ENCODE measurements at regions of chr19 and their contacts with region 1.

Region 1: DNA sequence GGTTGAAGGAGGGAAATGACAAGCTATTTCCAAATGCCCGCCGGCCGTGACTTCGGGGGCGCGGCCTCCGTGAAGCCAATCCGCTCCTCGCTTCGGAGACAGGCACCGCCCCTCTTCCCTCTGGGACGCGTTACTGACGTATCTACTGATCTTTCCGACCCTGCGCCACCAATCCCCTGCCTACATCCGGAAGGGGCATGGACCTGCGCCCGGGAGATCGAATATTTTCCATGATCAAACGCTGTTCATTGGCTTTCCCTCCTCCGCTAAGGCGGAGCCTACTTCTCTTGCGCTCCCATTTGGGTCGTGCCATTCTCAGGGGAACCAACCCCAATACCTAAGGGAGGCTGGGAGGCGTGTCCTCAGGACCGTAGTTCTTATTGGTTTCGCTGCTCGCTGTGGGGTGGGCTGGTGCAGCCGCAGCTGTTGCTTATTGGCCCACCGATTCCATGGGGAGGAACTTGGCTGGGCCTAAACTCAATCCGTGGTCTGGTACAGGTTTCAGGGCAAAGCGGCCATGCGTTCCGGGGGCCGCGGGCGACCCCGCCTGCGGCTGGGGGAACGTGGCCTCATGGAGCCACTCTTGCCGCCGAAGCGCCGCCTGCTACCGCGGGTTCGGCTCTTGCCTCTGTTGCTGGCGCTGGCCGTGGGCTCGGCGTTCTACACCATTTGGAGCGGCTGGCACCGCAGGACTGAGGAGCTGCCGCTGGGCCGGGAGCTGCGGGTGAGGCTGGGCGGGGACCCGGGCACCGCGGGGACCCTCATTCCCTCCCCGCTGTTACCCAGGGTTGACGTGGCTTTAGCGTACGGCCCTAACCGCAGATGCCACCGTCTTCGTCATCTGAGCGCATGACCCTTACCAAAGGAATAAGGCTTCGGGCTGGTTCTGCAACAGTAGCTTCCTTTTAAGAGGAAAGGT is at the start of gene QPCTL:
- DNase-seq: peak; percentile 90 to 99 (median 98)
- H3K4me3 ChIP-seq: peak within 1 kb of the TSS; percentile 68 to 100 (median 90)
- H3K27ac ChIP-seq: peak within 1 kb of the TSS; percentile 25 to 96 (median 84)
- H3K27me3 ChIP-seq: no peaks in the 10 kb centered on the region
- CTCF ChIP-seq: peak in 13 of 56 donors; percentile 0 to 58 (median 23)
- total RNA-seq, gene QPCTL: 3.0 to 16.5 (median 8.6) TPM

Region 2: GRCh38 chr19:45584332-45585157 is 107.9 kb before region 1 on chr19 and contains the start of gene OPA3:
- intact Hi-C with region 1: loop called in 1 of 2 experiments (anchors 2 kb)
- DNase-seq: peak; percentile 100
- H3K4me3 ChIP-seq: peak within 1 kb of the TSS; percentile 56 to 96 (median 83)
- H3K27ac ChIP-seq: peak within 1 kb of the TSS; percentile 92 to 100 (median 98)
- H3K27me3 ChIP-seq: no peaks in the 10 kb centered on the region
- CTCF ChIP-seq: peak in 25 of 56 donors; percentile 4 to 57 (median 22)
- total RNA-seq, gene OPA3: 7.1 to 16.8 (median 11.5) TPM

Region 3: DNA sequence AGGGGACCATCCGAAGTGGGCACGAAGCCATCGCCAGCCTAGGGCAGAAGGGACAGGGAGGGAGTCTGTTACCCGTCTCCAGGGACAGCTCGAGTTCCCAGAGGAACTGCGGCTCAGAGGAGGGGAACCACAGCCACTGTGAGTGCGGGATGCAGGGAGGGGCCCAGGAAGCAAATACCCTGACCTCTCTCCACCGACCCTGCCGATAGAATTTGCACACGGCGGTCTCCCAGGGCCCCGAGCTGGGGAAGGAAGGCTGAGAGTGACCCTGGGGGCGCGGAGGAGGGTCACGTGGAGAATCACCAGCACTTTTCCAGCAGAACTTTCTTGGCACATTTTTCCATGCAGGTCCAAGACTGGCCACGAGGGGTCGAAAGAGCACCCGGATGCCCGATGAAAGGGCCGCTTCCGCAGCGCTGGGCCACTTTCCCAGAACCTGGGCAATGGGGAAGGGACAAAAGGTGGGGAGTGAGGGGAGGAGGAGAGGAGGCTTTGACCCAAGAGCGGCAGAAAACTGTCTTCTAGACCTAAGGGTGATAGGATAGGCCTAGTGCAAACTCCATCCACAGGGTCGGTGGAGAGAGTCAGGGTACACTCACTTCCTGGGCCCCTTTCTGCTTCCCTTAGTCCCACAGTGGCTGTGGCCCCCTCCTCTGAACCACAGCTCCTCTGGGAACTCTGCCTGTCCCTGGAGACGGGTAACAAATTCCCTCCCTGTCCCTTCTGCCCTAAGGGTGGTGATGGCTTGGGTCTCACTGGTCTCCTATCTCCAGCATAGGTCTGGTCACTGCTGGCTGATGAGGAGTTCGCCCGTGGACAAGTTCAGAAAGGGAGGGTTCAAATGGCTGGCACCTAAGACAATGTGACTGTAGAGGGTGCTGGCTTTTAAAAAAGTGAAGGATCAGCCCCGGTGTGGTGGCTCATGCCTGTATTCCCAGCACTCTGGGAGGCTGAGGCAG is 85.1 kb before region 1 on chr19:
- intact Hi-C with region 1: loop called in 1 of 2 experiments (anchors 10 kb)
- DNase-seq: peak; percentile 30 to 72 (median 60)
- H3K4me3 ChIP-seq: peak overlapping the region in 37 of 59 donors; percentile 1 to 51 (median 31)
- H3K27ac ChIP-seq: peak overlapping the region in 53 of 59 donors; percentile 4 to 87 (median 69)
- H3K27me3 ChIP-seq: peaks cover 0 to 14% (median 3%) of the 10 kb centered on the region in 45 donors
- CTCF ChIP-seq: peak; percentile 62 to 90 (median 84)

Region 4: GRCh38 chr19:45717166-45717982 is 24.9 kb after region 1 on chr19:
- intact Hi-C with region 1: loop called in 1 of 2 experiments (anchors 2 kb)
- DNase-seq: peak; percentile 98 to 100 (median 99)
- H3K4me3 ChIP-seq: peak overlapping the region; percentile 44 to 82 (median 70)
- H3K27ac ChIP-seq: peak overlapping the region; percentile 72 to 98 (median 93)
- H3K27me3 ChIP-seq: no peaks in the 10 kb centered on the region
- CTCF ChIP-seq: peak in 36 of 56 donors; percentile 7 to 49 (median 30)

Region 5: GRCh38 chr19:46049597-46049996 is 357.2 kb after region 1 on chr19:
- intact Hi-C with region 1: no loop called
- DNase-seq: no peak
- H3K4me3 ChIP-seq: no peak overlapping the region
- H3K27ac ChIP-seq: no peak overlapping the region
- H3K27me3 ChIP-seq: peaks cover 0 to 3% (median 0%) of the 10 kb centered on the region in 45 donors
- CTCF ChIP-seq: no peak